ENCODE measurements at regions of chr2 and their contacts with region 1.

Region 1: DNA sequence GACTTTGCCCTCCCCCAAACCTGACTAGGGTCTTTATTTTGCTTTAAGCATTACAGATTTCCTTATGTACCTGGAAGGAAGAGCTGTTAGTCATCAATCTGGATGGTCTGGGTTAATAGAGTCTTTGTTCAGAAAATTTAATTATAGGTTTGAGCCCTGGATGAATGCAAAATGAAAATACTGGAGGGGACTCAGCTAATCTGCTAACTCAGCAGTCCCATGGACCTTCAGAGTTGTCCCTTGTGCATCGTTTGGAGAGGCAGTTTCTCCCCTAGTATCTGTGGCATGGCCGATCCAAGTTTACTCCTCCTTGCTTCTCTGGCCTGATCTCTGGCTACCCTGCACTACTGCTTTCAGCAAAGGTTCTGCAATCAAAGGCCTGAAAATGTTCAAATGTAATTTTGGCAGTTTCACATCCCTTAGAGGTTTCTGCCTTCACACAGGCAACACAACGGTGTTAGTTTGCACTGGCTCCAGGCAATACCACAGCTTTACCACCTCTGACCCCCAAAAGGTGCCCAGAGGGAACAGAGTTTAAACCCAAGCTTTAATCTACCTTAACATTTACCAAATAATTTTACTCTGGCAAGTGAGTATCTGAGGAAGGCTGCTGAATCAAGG is 134.3 kb downstream of the THADA start:
- DNase-seq: no peak
- H3K4me3 ChIP-seq: no peak overlapping the region
- H3K27ac ChIP-seq: peak overlapping the region; percentile 3
- H3K4me1 ChIP-seq: peaks cover 78% of the 10 kb centered on the region
- H3K27me3 ChIP-seq: no peaks in the 10 kb centered on the region
- CTCF ChIP-seq: no peak
- POLR2A ChIP-seq: no peak

Region 2: DNA sequence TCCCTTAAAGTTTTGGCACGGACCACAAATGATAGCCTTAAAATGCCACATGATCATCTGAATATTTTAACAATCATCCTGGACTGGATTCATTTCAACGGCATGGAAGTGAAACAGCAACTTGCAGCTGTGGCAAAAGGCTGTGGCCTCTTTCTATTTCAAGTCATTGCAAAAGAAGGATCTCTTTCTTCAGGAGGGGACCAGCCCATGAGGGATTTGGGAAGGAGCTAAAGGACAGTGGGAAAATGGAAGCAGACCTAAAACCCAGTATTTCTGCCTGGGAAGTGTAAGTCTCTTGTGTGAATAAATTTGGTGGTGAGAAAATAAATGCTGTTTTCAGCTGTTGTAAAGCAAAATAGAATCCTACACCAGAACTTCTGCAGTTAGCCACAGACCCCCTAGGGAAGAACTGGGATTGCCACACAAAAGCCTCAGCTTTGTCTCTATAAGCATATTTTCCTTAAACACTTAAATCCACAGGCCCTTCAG is 127.9 kb before region 1 on chr2:
- intact Hi-C with region 1: loop called (anchors 10 kb)
- DNase-seq: no peak
- H3K4me3 ChIP-seq: peak overlapping the region in 1 of 2 donors; percentile 23
- H3K27ac ChIP-seq: peak overlapping the region; percentile 67
- H3K4me1 ChIP-seq: peaks cover 59% of the 10 kb centered on the region
- H3K27me3 ChIP-seq: no peaks in the 10 kb centered on the region
- CTCF ChIP-seq: no peak
- POLR2A ChIP-seq: no peak

Region 3: DNA sequence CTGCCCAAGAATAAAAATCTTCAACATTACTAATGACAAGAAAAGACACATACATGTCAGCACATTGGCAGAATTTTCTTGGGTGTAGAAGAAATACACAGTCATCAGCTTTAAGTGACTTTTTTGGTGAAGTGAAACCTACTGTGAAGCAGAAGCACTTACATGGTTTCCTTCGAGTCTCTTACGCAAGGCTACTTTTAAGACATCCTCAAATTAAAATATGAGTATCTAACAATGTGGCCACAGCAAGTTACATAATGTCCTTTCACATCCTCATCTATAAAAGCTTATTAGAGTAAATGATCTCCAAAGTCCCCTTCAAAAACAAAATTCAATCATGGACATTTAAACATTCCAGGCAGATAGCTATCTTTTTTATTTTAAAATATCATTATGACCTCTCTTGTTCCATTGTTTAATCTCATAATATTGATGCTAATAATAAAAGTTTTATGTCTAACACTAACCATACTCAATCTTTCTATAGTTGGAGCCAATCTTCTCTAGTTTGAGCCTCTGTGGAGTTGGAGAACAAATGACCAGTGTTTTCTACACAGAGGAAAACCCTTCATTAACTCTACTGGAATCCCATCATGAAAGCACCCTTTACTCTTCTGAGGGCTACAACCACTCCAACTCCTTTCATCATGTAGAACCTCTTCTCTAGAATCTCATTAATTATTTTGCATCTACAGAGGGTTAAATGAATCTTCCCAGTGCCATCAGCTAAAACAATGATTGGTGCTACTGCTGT is 53.0 kb before region 1 on chr2:
- intact Hi-C with region 1: no loop called
- DNase-seq: no peak
- H3K4me3 ChIP-seq: no peak overlapping the region
- H3K27ac ChIP-seq: peak overlapping the region; percentile 14
- H3K4me1 ChIP-seq: peaks cover 62% of the 10 kb centered on the region
- H3K27me3 ChIP-seq: no peaks in the 10 kb centered on the region
- CTCF ChIP-seq: no peak
- POLR2A ChIP-seq: no peak

Measured in vagina (tissue), 2 donors.